GM12878 (cell line): ENCODE measurements at regions of chr3 and their contacts with region 1.

Region 1: DNA sequence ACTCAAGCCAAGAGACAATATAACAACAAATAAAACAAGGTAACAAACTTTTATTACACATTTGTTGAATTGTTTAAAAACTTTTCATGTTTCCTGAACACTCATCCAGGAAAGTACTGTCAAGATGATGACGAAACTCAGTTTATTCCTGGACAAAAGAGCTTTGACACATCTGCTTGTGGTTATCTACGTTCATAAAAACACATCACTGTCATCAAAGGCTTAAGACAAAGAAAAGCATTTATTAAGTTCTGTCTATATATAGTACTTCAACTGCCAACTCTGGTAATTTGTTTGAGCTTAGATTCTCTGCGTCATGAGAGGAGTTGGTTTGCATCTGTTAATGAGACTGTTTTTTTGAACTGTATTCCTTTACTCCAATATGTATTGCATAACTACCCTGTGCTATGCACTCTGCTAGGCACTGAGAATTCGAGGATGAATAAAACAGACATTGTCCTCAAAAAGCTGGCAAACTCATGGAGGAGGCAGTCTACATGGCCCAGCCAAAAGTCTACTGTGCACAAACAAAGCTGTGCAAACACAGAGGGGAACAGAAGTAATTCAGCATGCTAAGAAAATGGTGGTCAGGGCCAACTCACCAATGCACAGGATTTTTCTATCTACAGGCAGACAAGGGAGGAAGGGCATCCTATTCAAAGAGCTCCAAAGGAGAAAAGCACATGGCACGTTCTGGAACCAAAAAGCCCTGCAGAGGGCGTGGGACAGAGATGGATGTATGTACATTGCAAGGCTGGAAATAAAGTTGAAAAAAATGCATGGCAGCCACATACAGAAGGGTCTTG is 21.5 kb downstream of the PLD1 start:
- DNase-seq: no peak
- ATAC-seq: peak; percentile 10
- H3K4me3 ChIP-seq: no peak overlapping the region
- H3K27ac ChIP-seq: no peak overlapping the region
- H3K4me1 ChIP-seq: no peaks in the 10 kb centered on the region; the same call in 1 of the 2 replicates
- H3K27me3 ChIP-seq: no peaks in the 10 kb centered on the region
- CTCF ChIP-seq: peak in 1 of 3 experiments; percentile 18; a peak in 1 of 6 replicates
- EP300 ChIP-seq: peak; percentile 69 to 92; a peak in 3 of 4 replicates
- POLR2A ChIP-seq: no peak
- RAD21 ChIP-seq: no peak

Region 2: GRCh38 chr3:171646357-171647133 is 142.2 kb before region 1 on chr3:
- CTCF ChIA-PET with region 1: no interaction called
- POLR2A ChIA-PET with region 1: interaction called, 10 read pairs
- RAD21 ChIA-PET with region 1: interaction called, 6 read pairs
- SMC1A ChIA-PET with region 1: interaction called, 3 read pairs
- in situ Hi-C with region 1: no loop called
- intact Hi-C with region 1: no loop called
- DNase-seq: no peak
- ATAC-seq: peak; percentile 70
- H3K4me3 ChIP-seq: no peak overlapping the region
- H3K27ac ChIP-seq: no peak overlapping the region
- H3K4me1 ChIP-seq: no peaks in the 10 kb centered on the region
- H3K27me3 ChIP-seq: no peaks in the 10 kb centered on the region
- CTCF ChIP-seq: peak; percentile 44 to 67 (median 55)
- EP300 ChIP-seq: no peak
- POLR2A ChIP-seq: no peak
- RAD21 ChIP-seq: peak; percentile 80

Region 3: GRCh38 chr3:171809821-171810628 is 21.3 kb after region 1 on chr3 and contains the start of gene PLD1:
- CTCF ChIA-PET with region 1: interaction called, 17 read pairs
- POLR2A ChIA-PET with region 1: interaction called, 53 read pairs
- RAD21 ChIA-PET with region 1: interaction called, 18 read pairs
- SMC1A ChIA-PET with region 1: interaction called, 45 read pairs
- in situ Hi-C with region 1: no loop called
- intact Hi-C with region 1: no loop called
- DNase-seq: no peak
- ATAC-seq: peak; percentile 72
- H3K4me3 ChIP-seq: peak within 1 kb of the TSS; percentile 69
- H3K27ac ChIP-seq: peak within 1 kb of the TSS; percentile 45
- H3K4me1 ChIP-seq: no peaks in the 10 kb centered on the region
- H3K27me3 ChIP-seq: no peaks in the 10 kb centered on the region
- CTCF ChIP-seq: 0 out of 6 replicates have a peak, but pooled peaks of 1 of the 3 experiments have one; percentile 5
- EP300 ChIP-seq: peak; percentile 6 to 12; a peak in 2 of 4 replicates
- POLR2A ChIP-seq: no peak
- RAD21 ChIP-seq: no peak
- polyA plus RNA-seq, gene PLD1: 3.1 to 3.4 TPM

Region 4: GRCh38 chr3:171822431-171823106 is 33.8 kb after region 1 on chr3:
- CTCF ChIA-PET with region 1: interaction called, 66 read pairs
- POLR2A ChIA-PET with region 1: interaction called, 23 read pairs
- RAD21 ChIA-PET with region 1: interaction called, 333 read pairs
- SMC1A ChIA-PET with region 1: interaction called, 63 read pairs
- in situ Hi-C with region 1: no loop called
- intact Hi-C with region 1: no loop called
- DNase-seq: no peak
- ATAC-seq: peak; percentile 88
- H3K4me3 ChIP-seq: no peak overlapping the region
- H3K27ac ChIP-seq: no peak overlapping the region
- H3K4me1 ChIP-seq: no peaks in the 10 kb centered on the region
- H3K27me3 ChIP-seq: no peaks in the 10 kb centered on the region; a peak in 1 of 4 replicates
- CTCF ChIP-seq: no peak
- EP300 ChIP-seq: no peak
- POLR2A ChIP-seq: no peak
- RAD21 ChIP-seq: no peak

Region 5: GRCh38 chr3:171860830-171861535 is 72.2 kb after region 1 on chr3:
- CTCF ChIA-PET with region 1: no interaction called
- POLR2A ChIA-PET with region 1: no interaction called
- RAD21 ChIA-PET with region 1: no interaction called
- SMC1A ChIA-PET with region 1: no interaction called
- in situ Hi-C with region 1: no loop called
- intact Hi-C with region 1: no loop called
- DNase-seq: no peak
- ATAC-seq: no peak
- H3K4me3 ChIP-seq: no peak overlapping the region
- H3K27ac ChIP-seq: no peak overlapping the region
- H3K4me1 ChIP-seq: no peaks in the 10 kb centered on the region
- H3K27me3 ChIP-seq: no peaks in the 10 kb centered on the region
- CTCF ChIP-seq: no peak
- EP300 ChIP-seq: no peak
- POLR2A ChIP-seq: no peak
- RAD21 ChIP-seq: no peak